Transverse colon (tissue), 4 donors: ENCODE measurements at regions of chrX and their contacts with region 1.

Region 1: GRCh38 chrX:52574416-52575275 is 57.8 kb upstream of the XAGE1B start:
- DNase-seq: peak; percentile 27
- H3K4me3 ChIP-seq: no peak overlapping the region
- H3K27ac ChIP-seq: no peak overlapping the region
- H3K4me1 ChIP-seq: peaks cover 0 to 2% (median 0%) of the 10 kb centered on the region in 4 donors
- H3K27me3 ChIP-seq: no peaks in the 10 kb centered on the region
- CTCF ChIP-seq: peak; percentile 48 to 64 (median 56)
- EP300 ChIP-seq: no peak
- POLR2A ChIP-seq: no peak

Region 2: DNA sequence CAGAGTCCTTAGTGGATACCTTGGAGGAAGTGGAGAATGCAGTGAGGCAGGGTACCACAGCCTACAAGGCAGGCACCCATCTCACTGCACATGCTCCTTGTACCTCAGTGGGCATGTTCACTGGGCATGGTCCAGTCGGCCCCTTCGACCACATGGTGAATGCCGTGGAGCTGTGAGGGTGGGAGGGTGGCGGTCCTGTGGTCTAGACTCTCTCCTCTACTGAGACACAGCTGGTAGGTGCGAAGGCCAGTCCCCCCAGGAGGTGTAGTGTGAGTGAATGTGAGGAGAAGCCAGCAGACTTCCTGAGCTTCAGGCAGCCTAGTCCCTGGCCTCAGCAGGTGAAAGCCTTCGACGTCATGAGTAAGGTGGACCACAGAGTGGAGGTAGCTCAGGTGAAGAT is 193.7 kb before region 1 on chrX:
- in situ Hi-C with region 1: no loop called
- intact Hi-C with region 1: no loop called
- DNase-seq: no peak
- H3K4me3 ChIP-seq: no peak overlapping the region
- H3K27ac ChIP-seq: no peak overlapping the region
- H3K4me1 ChIP-seq: no peaks in the 10 kb centered on the region
- H3K27me3 ChIP-seq: no peaks in the 10 kb centered on the region
- CTCF ChIP-seq: no peak
- EP300 ChIP-seq: no peak
- POLR2A ChIP-seq: no peak

Region 3: DNA sequence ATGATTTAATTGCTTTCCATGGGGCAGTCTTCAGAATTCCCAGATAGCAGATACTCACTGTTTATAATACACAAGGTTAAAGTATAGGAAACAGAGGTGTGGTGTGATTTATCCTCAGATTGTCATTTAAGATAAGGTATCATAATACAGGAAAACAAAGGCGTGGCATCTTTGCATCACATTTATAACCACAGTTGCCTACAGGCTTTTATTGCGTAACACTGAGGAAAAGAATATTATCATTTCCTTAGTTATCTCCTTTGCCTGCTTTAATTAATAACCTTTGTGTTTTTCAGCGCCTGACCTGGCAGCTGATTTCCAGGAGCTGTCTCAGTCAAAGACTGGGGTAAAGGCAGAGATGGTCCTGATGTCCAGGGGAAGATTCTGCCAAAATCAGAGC is 11.2 kb after region 1 on chrX:
- in situ Hi-C with region 1: no loop called
- intact Hi-C with region 1: no loop called
- DNase-seq: no peak
- H3K4me3 ChIP-seq: no peak overlapping the region
- H3K27ac ChIP-seq: no peak overlapping the region
- H3K4me1 ChIP-seq: no peaks in the 10 kb centered on the region
- H3K27me3 ChIP-seq: no peaks in the 10 kb centered on the region
- CTCF ChIP-seq: no peak
- EP300 ChIP-seq: no peak
- POLR2A ChIP-seq: no peak

Region 4: DNA sequence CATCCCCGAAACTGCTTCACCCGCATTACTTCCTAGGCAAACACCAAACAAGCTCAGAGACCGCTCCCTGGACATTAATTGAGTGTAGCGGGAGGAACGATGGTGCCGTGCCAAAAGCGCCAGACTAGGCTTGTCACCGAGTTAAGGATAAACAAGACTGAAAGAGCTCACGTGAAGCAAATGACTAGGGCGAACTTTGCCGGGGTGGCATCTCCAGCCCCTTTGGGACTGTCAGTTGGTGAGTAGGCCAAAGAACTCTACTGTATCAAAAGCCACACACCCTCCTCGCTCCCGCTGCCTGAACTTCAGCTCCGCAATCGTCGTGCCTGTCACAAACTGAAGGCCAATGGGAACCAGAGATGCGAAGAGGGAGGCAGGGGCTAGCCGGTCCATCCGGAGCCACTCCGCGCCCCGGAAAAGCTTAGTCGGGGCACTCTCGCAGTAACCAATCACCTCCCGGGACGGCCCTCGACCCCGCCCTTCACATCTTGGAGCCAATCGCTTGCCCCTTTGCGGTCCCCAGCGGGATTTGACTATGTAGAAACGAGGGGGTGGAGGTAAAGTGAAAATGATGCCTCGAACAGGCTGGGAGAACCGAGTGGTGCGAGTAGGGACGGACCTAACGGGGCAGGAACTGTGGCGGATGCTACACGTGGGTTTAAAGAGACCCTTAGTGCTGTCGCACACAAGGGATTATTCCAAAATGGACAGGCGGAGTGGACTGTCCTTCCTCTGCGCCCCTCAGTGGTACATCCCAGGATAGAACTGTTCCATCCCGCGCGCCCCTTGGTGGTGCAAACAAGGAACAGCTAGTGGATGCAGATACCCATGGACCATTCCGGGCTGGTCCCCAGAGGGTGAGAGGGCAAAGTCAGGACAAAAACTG is 420.7 kb after region 1 on chrX:
- in situ Hi-C with region 1: loop called in 1 of 4 experiments (anchors 25 kb)
- intact Hi-C with region 1: no loop called
- DNase-seq: peak; percentile 94
- H3K4me3 ChIP-seq: peak overlapping the region; percentile 34 to 63 (median 43)
- H3K27ac ChIP-seq: peak overlapping the region; percentile 77 to 88 (median 84)
- H3K4me1 ChIP-seq: peaks cover 0 to 12% (median 9%) of the 10 kb centered on the region in 4 donors
- H3K27me3 ChIP-seq: no peaks in the 10 kb centered on the region
- CTCF ChIP-seq: peak; percentile 57 to 95 (median 63)
- EP300 ChIP-seq: no peak
- POLR2A ChIP-seq: peak; percentile 18